ENCODE measurements at regions of chr2 and their contacts with region 1.

Region 1: GRCh38 chr2:25606892-25607291 is 66.5 kb downstream of the DTNB start:
- DNase-seq: peak; percentile 20
- H3K4me3 Mint-ChIP-seq: no peak overlapping the region
- H3K27ac Mint-ChIP-seq: no peak overlapping the region
- H3K4me1 Mint-ChIP-seq: peaks cover 8% of the 10 kb centered on the region
- H3K27me3 Mint-ChIP-seq: no peaks in the 10 kb centered on the region

Region 2: DNA sequence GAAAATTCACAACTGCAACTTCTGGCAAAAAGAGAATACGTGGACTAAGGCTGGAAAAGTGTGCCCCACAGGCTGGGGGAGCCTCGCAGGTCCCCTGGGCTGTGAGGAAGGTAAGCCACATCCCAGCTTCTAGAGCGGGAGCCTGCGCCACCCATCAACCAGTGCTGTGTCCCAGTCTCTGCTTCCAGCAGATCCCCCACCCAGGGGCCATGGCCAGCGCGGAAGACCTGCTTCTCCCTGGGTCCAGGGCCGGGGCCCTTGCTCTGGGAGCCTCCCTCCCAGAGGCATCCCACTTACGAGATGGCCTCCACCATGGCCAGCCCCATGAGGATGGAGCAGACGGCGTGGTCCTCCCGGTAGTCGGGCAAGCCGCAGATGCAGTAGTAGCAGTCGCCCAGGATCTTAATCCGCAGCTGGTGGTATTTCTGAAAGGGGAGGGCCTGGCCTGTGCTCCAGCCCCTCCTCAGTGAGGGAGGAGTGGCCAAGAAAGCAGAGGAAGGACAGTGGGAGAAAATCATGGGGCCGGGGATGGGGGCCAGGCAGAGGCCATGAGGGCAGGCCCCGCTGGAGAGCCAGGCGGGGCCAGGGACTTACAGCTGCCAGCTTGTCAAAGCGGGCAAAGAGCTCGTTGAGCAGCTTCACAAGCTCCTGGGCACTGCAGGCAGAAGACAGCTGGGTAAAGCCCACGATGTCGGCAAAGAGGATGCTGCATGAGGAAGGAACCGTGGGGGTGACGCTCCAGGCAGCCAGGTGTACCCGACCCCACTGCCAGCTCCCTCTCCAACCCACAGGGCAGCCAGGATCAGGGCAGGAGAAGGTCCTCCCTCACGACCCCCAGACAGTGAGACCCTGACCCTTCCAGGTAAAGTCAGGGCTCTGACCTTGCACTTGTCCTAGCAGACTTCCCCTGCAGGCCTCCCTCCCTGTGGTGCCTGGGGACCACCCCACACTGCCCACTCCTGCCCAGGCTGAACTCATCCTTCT is 765.6 kb before region 1 on chr2:
- CTCF ChIA-PET with region 1: no interaction called
- intact Hi-C with region 1: no loop called
- DNase-seq: no peak
- H3K4me3 Mint-ChIP-seq: no peak overlapping the region
- H3K27ac Mint-ChIP-seq: no peak overlapping the region
- H3K4me1 Mint-ChIP-seq: no peaks in the 10 kb centered on the region
- H3K27me3 Mint-ChIP-seq: no peaks in the 10 kb centered on the region

Region 3: DNA sequence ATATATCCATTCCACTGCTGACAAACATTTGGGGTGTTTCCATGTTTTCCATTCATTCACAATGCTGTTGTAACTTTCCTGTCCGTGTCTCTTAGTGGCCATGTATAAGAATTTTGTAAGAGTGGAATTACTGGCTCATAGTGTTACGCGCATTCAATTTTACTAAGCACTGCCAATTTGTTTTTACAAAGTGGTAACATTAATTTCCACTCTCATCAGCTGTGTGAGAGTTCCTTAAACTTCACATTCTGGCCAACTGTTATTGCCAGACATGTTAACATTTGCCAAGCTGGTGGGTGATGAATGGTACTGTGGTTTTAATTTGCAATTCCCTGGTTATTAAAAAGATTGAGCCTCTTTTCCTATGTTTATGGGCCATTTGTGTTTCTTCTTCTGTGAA is 67.8 kb before region 1 on chr2:
- CTCF ChIA-PET with region 1: no interaction called
- intact Hi-C with region 1: no loop called
- DNase-seq: no peak
- H3K4me3 Mint-ChIP-seq: no peak overlapping the region
- H3K27ac Mint-ChIP-seq: no peak overlapping the region
- H3K4me1 Mint-ChIP-seq: no peaks in the 10 kb centered on the region
- H3K27me3 Mint-ChIP-seq: no peaks in the 10 kb centered on the region

Region 4: DNA sequence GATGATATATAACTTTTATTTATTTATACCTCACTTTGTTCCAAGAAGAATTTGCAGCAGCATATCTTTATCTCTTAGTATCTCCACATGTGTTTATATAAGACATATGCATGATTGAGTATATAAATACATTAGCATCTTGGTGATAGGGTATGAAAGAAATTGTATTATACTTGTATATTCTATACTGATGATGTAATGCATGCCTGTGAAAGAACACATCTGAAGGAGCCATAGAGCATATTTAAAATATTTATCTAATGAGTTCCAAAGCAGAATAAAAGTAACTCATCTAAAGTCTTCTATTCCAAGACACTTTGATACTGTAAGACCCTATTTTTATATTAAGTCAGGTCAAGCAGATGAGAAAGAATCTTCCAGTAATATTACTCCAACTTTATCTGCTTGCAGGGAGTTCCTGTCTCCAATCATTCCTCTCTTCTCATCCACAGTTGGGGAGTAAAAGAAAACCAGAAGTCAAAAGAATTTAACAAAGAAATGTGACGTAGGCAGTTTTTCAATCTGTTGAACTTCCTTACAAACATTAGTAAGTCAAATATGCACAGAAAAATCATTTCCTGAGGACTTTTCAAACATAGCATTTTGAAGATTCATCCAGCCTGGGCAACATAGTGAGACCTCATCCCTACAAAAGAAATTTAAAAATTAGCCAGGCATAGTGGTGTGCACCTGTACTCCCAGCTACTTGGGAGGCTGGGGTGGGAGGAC is 10.2 kb before region 1 on chr2:
- CTCF ChIA-PET with region 1: interaction called, 10 read pairs
- intact Hi-C with region 1: no loop called
- DNase-seq: no peak
- H3K4me3 Mint-ChIP-seq: no peak overlapping the region
- H3K27ac Mint-ChIP-seq: no peak overlapping the region
- H3K4me1 Mint-ChIP-seq: peaks cover 21% of the 10 kb centered on the region
- H3K27me3 Mint-ChIP-seq: no peaks in the 10 kb centered on the region

Region 5: GRCh38 chr2:25618642-25619037 is 11.7 kb after region 1 on chr2:
- CTCF ChIA-PET with region 1: interaction called, 19 read pairs
- intact Hi-C with region 1: no loop called
- DNase-seq: no peak
- H3K4me3 Mint-ChIP-seq: no peak overlapping the region
- H3K27ac Mint-ChIP-seq: no peak overlapping the region
- H3K4me1 Mint-ChIP-seq: no peaks in the 10 kb centered on the region
- H3K27me3 Mint-ChIP-seq: no peaks in the 10 kb centered on the region

Region 6: GRCh38 chr2:25664183-25664964 is 57.5 kb after region 1 on chr2:
- CTCF ChIA-PET with region 1: interaction called, 37 read pairs
- intact Hi-C with region 1: loop called (anchors 1 kb)
- DNase-seq: peak; percentile 64
- H3K4me3 Mint-ChIP-seq: peak overlapping the region; percentile 36
- H3K27ac Mint-ChIP-seq: no peak overlapping the region
- H3K4me1 Mint-ChIP-seq: peaks cover 21% of the 10 kb centered on the region
- H3K27me3 Mint-ChIP-seq: no peaks in the 10 kb centered on the region

Region 7: GRCh38 chr2:25673300-25674076 is 66.6 kb after region 1 on chr2 and contains the start of gene DTNB:
- CTCF ChIA-PET with region 1: interaction called, 3 read pairs
- intact Hi-C with region 1: loop called (anchors 2 kb)
- DNase-seq: peak; percentile 82
- H3K4me3 Mint-ChIP-seq: peak within 1 kb of the TSS; percentile 79
- H3K27ac Mint-ChIP-seq: peak within 1 kb of the TSS; percentile 60
- H3K4me1 Mint-ChIP-seq: peaks cover 25% of the 10 kb centered on the region
- H3K27me3 Mint-ChIP-seq: no peaks in the 10 kb centered on the region
- total RNA-seq, gene DTNB: 27.2 to 27.6 TPM

Region 8: DNA sequence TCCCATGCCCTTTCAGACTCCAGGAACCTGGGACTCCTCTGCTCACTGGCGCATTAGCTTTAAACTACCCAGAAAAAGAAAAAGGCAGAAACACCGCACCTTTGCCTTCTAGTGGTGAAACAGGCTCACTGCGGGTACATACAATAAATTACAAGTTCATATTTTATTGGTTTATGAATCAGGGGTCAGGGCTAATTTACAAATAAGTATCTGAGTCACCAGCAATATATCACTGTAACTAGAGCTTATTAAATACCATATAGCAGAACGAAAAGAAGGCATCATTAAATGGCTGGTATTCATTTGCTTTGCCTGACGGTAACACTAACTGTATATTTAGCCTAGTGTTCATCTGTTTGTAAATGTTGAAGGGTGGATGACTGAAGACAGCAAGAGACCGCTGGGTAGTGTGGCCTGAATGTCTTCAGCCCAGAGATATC is 93.3 kb after region 1 on chr2:
- CTCF ChIA-PET with region 1: interaction called, 65 read pairs
- intact Hi-C with region 1: loop called (anchors 1 kb)
- DNase-seq: peak; percentile 53
- H3K4me3 Mint-ChIP-seq: no peak overlapping the region
- H3K27ac Mint-ChIP-seq: no peak overlapping the region
- H3K4me1 Mint-ChIP-seq: no peaks in the 10 kb centered on the region
- H3K27me3 Mint-ChIP-seq: no peaks in the 10 kb centered on the region

Region 9: DNA sequence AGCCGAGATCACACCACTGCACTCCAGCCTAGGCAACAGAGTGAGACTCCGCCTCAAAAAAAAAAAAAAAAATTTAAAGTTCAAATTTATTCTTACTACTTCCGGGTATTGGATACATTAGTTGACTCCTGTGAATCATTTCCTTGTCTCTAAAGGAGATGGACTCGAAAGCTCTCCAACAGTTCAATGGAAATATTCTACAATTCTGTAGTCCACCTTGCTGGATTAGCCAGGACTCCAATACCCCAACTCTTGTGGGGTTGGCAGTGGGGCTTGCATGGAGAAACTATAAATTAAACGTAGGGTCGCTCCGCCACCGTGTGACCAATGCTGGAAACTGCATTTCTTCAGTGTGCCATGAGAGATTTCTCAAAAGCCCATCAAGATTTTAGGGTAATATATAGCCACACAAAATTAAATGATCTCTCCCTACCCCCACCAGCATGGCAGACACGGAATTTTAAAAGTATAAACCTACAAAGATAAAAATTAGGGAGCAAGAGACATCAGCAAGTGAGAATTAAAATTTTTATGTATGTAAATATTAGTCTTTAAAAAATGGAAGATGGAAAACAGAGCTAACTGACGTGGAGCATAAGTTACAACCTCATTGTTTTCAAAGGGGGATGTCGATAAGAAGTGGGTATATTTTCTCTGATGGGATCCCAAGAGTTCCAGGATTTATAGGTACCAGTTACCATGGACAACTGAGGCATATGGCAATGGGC is 538.2 kb after region 1 on chr2:
- CTCF ChIA-PET with region 1: interaction called, 3 read pairs
- intact Hi-C with region 1: loop called (anchors 1 kb)
- DNase-seq: peak; percentile 82
- H3K4me3 Mint-ChIP-seq: no peak overlapping the region
- H3K27ac Mint-ChIP-seq: no peak overlapping the region
- H3K4me1 Mint-ChIP-seq: no peaks in the 10 kb centered on the region
- H3K27me3 Mint-ChIP-seq: peaks cover 2% of the 10 kb centered on the region

Measured in activated naive CD4-positive, alpha-beta T cell treated with anti-CD3 and anti-CD28 coated beads for 36 hours (primary cell).